Testis (tissue), 5 donors: ENCODE measurements at regions of chr6 and their contacts with region 1.

Region 1: GRCh38 chr6:125956506-125957390 is at the start of gene HINT3:
- DNase-seq: peak; percentile 99
- H3K4me3 ChIP-seq: peak within 1 kb of the TSS; percentile 84 to 96
- H3K27ac ChIP-seq: peak within 1 kb of the TSS; percentile 87 to 93
- H3K4me1 ChIP-seq: peaks cover 11% of the 10 kb centered on the region
- H3K27me3 ChIP-seq: no peaks in the 10 kb centered on the region
- CTCF ChIP-seq: peak; percentile 97 to 99 (median 97)
- POLR2A ChIP-seq: no peak
- total RNA-seq, gene HINT3: 19.0 to 22.5 TPM

Region 2: GRCh38 chr6:125790358-125791150 is 166.2 kb before region 1 on chr6 and contains the start of gene NCOA7:
- intact Hi-C with region 1: loop called (anchors 5 kb)
- DNase-seq: peak; percentile 89
- H3K4me3 ChIP-seq: peak within 1 kb of the TSS; percentile 74 to 95
- H3K27ac ChIP-seq: peak within 1 kb of the TSS; percentile 97 to 98
- H3K4me1 ChIP-seq: peaks cover 18% of the 10 kb centered on the region
- H3K27me3 ChIP-seq: no peaks in the 10 kb centered on the region
- CTCF ChIP-seq: peak in 2 of 3 experiments; percentile 1 to 7
- POLR2A ChIP-seq: no peak
- total RNA-seq, gene NCOA7: 18.9 to 26.7 TPM

Region 3: DNA sequence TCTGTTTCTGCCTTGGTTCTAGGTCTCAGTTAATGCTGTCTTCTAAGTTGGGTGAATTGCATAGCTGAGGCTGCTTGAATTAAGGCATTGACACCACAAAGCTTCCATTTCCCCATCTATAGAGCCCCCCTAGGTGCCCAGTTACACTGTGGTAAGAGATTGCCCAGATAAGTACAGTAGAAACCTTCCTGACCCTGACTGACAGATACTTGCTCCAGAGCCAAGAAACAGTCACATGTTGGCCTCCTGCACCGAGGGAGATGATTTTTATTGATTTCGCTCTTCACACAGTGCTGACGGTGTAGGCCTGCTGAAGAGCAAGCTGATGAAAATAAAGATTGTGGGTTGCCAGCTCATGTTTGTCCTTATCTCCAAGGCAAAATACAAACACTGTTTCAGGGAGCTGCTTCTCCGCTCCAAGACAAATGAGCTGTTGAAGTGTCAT is 97.5 kb after region 1 on chr6:
- intact Hi-C with region 1: no loop called
- DNase-seq: no peak
- H3K4me3 ChIP-seq: no peak overlapping the region
- H3K27ac ChIP-seq: no peak overlapping the region
- H3K4me1 ChIP-seq: peaks cover 3% of the 10 kb centered on the region
- H3K27me3 ChIP-seq: no peaks in the 10 kb centered on the region
- CTCF ChIP-seq: no peak
- POLR2A ChIP-seq: no peak